Activated CD8-positive, alpha-beta memory T cell treated with anti-CD3 and anti-CD28 coated beads, Interleukin-2, amount 10 ng/mL, durations not matched to agents 7 days and 5 days (primary cell): ENCODE measurements at regions of chr1 and their contacts with region 1.

Region 1: GRCh38 chr1:179081687-179082332 is at the start of gene TOR3A:
- DNase-seq: peak; percentile 93
- ATAC-seq: peak; percentile 88
- H3K4me3 Mint-ChIP-seq: peak within 1 kb of the TSS; percentile 99
- H3K27ac Mint-ChIP-seq: peak within 1 kb of the TSS; percentile 96
- H3K4me1 Mint-ChIP-seq: peaks cover 34% of the 10 kb centered on the region
- H3K27me3 Mint-ChIP-seq: no peaks in the 10 kb centered on the region
- total RNA-seq, gene TOR3A: 52.4 to 56.1 TPM

Region 2: GRCh38 chr1:179293340-179294327 is 211.8 kb after region 1 on chr1 and contains the start of gene SOAT1:
- CTCF ChIA-PET with region 1: interaction called, 18 read pairs
- DNase-seq: peak; percentile 95
- ATAC-seq: peak; percentile 98
- H3K4me3 Mint-ChIP-seq: peak within 1 kb of the TSS; percentile 88
- H3K27ac Mint-ChIP-seq: peak within 1 kb of the TSS; percentile 95
- H3K4me1 Mint-ChIP-seq: peaks cover 42% of the 10 kb centered on the region
- H3K27me3 Mint-ChIP-seq: no peaks in the 10 kb centered on the region
- total RNA-seq, gene SOAT1: 47.8 to 84.5 TPM